OCI-LY7 (cell line): ENCODE measurements at regions of chr20 and their contacts with region 1.

Region 1: DNA sequence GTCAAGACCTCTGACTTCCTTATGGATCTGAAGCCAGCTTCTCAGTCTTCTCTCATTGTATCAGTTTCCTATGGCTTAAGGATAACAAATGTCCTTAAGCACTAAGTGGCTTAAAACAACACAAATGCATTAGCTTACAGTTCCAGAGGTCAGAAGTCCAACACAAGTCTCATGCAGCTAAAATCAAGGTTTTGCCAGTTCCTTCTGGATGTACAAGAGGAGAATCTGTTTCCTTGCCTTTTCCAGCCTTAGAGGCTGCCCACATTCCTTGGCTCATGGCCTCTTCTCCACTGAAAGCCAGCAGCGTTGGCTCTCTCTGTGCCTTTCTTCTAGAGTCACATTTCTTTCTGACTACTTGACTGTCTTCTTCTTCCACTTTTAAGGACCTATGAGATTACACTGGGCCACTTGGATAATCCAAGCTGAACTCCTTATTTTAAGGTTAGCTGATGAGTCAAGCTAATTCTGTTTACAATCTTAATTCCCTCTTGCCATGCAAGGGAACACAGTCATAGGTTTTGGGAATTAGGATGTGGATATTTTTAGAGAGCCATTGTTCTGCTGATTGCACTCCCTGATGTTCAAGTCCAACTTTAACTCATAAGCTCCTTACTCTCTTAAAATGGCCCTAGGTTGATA is 179.0 kb downstream of the BCAS1 start:
- DNase-seq: no peak
- H3K4me3 ChIP-seq: no peak overlapping the region
- H3K27ac ChIP-seq: peak overlapping the region; percentile 63
- H3K4me1 ChIP-seq: peaks cover 70% of the 10 kb centered on the region
- CTCF ChIP-seq: no peak

Region 2: GRCh38 chr20:53839423-53840176 is 51.8 kb before region 1 on chr20:
- CTCF ChIA-PET with region 1: no interaction called
- POLR2A ChIA-PET with region 1: interaction called, 3 read pairs
- intact Hi-C with region 1: loop called (anchors 2 kb)
- DNase-seq: peak; percentile 94
- H3K4me3 ChIP-seq: peak overlapping the region; percentile 43
- H3K27ac ChIP-seq: peak overlapping the region; percentile 76
- H3K4me1 ChIP-seq: peaks cover 91% of the 10 kb centered on the region
- CTCF ChIP-seq: no peak

Region 3: GRCh38 chr20:53878578-53879363 is 12.7 kb before region 1 on chr20:
- CTCF ChIA-PET with region 1: interaction called, 6 read pairs
- POLR2A ChIA-PET with region 1: interaction called, 27 read pairs
- intact Hi-C with region 1: no loop called
- DNase-seq: no peak
- H3K4me3 ChIP-seq: no peak overlapping the region
- H3K27ac ChIP-seq: no peak overlapping the region
- H3K4me1 ChIP-seq: peaks cover 36% of the 10 kb centered on the region
- CTCF ChIP-seq: no peak

Region 4: DNA sequence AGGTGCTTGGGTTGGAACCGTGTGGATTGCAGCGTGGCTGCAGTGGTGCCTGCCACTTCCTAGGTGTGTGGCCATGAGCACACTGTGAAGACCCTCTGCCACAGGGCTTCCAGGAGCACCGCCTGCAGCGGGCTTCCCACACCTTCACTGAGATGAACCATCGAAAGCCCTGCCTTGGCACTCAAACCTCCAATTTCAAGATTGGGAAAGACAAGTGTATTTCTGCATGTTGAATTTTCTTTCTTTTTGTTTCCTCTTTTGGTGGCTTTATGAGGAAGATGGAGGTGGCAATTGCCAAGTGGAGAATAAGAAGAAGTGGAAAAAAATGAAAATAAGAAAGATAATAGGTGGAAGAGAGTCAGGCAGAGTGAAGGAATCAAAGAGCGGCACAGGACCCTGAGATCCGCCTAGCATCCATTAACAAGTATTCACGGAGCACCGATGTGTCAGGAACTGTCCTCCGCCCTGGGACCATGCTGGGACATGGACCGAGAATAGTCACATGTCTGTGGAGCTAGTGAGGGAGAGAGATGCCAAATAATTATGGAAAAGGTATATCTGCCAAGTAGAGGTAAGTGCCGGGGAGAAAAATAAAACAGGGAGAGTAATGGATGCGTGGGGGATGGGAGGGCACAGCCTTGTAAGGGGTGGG is 19.1 kb after region 1 on chr20:
- CTCF ChIA-PET with region 1: interaction called, 11 read pairs
- POLR2A ChIA-PET with region 1: interaction called, 98 read pairs
- intact Hi-C with region 1: loop called (anchors 1 kb)
- DNase-seq: no peak
- H3K4me3 ChIP-seq: no peak overlapping the region
- H3K27ac ChIP-seq: no peak overlapping the region
- H3K4me1 ChIP-seq: peaks cover 69% of the 10 kb centered on the region
- CTCF ChIP-seq: no peak